A549 (cell line): ENCODE measurements at regions of chr14 and their contacts with region 1.

Region 1: GRCh38 chr14:104970231-104971101 is 7.7 kb downstream of the AHNAK2 start:
- DNase-seq: peak; percentile 78 to 90
- ATAC-seq: peak; percentile 30 to 60
- H3K4me3 ChIP-seq: peak overlapping the region; percentile 67
- H3K27ac ChIP-seq: peak overlapping the region; percentile 97 to 99
- H3K4me1 ChIP-seq: peaks cover 84% of the 10 kb centered on the region
- CTCF ChIP-seq: no peak
- EP300 ChIP-seq: no peak
- POLR2A ChIP-seq: peak; percentile 50
- RAD21 ChIP-seq: 0 out of 5 replicates have a peak, but pooled peaks of 1 of the 2 experiments have one; percentile 13

Region 2: DNA sequence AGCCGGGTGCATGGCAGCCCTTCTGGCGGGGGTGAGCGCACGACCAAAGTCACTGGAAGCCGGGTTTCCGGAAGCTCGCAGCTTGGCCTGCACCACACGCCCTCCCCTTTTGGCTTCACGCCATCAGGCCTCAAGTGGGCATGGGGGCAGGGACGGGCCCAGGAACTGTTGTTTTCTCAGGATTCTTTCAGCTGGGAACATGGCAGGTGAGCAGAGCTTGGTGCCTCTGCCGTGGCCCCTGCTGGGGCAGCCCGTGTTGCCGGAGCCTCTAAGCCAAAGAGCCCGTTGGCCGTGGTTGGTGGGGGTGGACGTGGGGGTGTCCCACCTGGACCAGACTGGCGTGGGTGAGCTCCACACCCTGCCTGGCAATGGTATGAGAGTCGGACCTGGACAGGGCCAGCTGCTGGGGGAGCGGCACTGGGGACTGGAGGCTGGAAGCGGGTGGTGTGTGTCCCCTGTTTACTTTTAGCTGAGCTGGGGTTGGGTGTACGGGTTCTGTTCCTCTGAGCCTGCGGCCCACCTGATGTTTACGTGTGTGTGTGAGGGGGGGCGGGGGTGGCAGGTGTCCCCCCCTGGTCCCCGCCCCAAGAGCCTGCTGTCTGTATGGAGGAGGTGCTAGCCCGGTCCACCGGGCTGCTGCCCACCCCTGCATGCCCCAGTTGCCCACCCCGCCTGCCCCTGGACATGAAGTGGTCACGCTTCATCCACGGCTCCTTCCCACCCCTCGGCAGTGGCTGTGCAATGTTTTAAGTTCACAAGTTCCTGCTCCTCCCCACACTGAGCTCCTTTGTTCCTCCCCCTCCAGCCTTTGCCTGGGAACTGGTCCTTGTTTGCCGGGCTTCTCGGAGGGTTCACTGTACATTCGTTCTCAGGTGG is 74.4 kb before region 1 on chr14:
- CTCF ChIA-PET with region 1: interaction called, 40 read pairs
- POLR2A ChIA-PET with region 1: interaction called, 5 read pairs
- DNase-seq: no peak
- ATAC-seq: peak; percentile 9 to 30; a peak in 3 of 6 replicates
- H3K4me3 ChIP-seq: no peak overlapping the region
- H3K27ac ChIP-seq: no peak overlapping the region
- H3K4me1 ChIP-seq: peaks cover 15% of the 10 kb centered on the region
- CTCF ChIP-seq: no peak
- EP300 ChIP-seq: no peak
- POLR2A ChIP-seq: no peak
- RAD21 ChIP-seq: no peak

Region 3: DNA sequence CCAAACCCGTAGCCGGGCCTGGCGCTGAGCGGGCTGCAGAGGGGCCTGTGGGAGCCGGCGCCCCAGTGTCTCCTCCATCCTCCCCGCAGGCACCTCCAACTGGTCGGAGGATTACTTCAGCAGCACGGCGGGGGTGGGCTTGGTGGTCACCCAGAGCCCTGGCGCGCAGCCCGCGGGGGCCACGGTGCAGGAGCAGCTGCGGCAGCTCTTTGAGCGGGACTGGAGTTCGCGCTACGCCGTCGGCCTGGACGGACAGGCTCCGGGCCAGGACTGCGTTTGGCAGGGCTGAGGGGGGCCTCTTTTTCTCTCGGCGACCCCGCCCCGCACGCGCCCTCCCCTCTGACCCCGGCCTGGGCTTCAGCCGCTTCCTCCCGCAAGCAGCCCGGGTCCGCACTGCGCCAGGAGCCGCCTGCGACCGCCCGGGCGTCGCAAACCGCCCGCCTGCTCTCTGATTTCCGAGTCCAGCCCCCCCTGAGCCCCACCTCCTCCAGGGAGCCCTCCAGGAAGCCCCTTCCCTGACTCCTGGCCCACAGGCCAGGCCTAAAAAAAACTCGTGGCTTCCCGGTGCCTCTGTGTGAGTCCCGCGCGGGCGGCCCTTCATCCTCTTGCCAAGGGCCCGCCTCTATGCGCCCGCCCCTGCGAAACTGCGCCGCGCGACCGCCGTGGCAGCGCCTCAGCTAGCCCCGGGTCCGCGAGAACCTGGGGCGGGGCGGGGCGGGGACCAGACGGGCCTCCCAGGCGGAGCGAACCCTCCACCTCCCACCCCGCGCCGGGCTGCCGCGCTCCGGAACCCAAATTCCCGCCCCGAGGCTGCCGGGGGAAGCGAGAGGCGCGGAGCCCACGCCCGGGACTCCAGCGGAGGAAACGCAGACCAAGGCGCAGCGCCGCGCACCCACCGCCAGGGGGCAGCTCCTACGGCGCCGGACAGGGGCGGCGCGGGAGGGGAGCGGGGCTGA is 37.5 kb before region 1 on chr14:
- CTCF ChIA-PET with region 1: interaction called, 86 read pairs
- POLR2A ChIA-PET with region 1: interaction called, 22 read pairs
- DNase-seq: peak; percentile 79 to 89
- ATAC-seq: peak; percentile 57 to 80
- H3K4me3 ChIP-seq: peak overlapping the region; percentile 48
- H3K27ac ChIP-seq: peak overlapping the region; percentile 79 to 92
- H3K4me1 ChIP-seq: peaks cover 7% of the 10 kb centered on the region; the same call in 1 of the 3 replicates
- CTCF ChIP-seq: peak; percentile 71
- EP300 ChIP-seq: no peak
- POLR2A ChIP-seq: no peak
- RAD21 ChIP-seq: peak; percentile 43 to 76; a peak in 4 of 5 replicates

Region 4: GRCh38 chr14:104956290-104956890 is 14.1 kb before region 1 on chr14:
- CTCF ChIA-PET with region 1: interaction called, 12 read pairs
- POLR2A ChIA-PET with region 1: interaction called, 3 read pairs
- DNase-seq: no peak
- ATAC-seq: peak in 1 of 2 experiments; percentile 24; a peak in 2 of 6 replicates
- H3K4me3 ChIP-seq: no peak overlapping the region
- H3K27ac ChIP-seq: no peak overlapping the region
- H3K4me1 ChIP-seq: peaks cover 7% of the 10 kb centered on the region; the same call in 2 of the 3 replicates
- CTCF ChIP-seq: no peak
- EP300 ChIP-seq: no peak
- POLR2A ChIP-seq: no peak
- RAD21 ChIP-seq: no peak

Region 5: GRCh38 chr14:104985675-104986525 is 15.4 kb after region 1 on chr14 and contains the start of gene CLBA1:
- CTCF ChIA-PET with region 1: interaction called, 39 read pairs
- POLR2A ChIA-PET with region 1: interaction called, 37 read pairs
- DNase-seq: peak; percentile 90 to 93
- ATAC-seq: peak; percentile 89 to 91
- H3K4me3 ChIP-seq: peak within 1 kb of the TSS; percentile 87
- H3K27ac ChIP-seq: peak within 1 kb of the TSS; percentile 89 to 96
- H3K4me1 ChIP-seq: peaks cover 16% of the 10 kb centered on the region; the same call in 2 of the 3 replicates
- CTCF ChIP-seq: no peak
- EP300 ChIP-seq: no peak
- POLR2A ChIP-seq: peak; percentile 55
- RAD21 ChIP-seq: no peak
- polyA plus RNA-seq, gene CLBA1: 11.3 and 11.5 TPM in 2 replicates

Region 6: GRCh38 chr14:105020815-105021655 is 50.6 kb after region 1 on chr14 and contains the start of gene CDCA4:
- CTCF ChIA-PET with region 1: interaction called, 81 read pairs
- POLR2A ChIA-PET with region 1: interaction called, 76 read pairs
- DNase-seq: peak; percentile 96 to 97
- ATAC-seq: peak; percentile 81 to 84
- H3K4me3 ChIP-seq: peak within 1 kb of the TSS; percentile 97
- H3K27ac ChIP-seq: peak within 1 kb of the TSS; percentile 97 to 98
- H3K4me1 ChIP-seq: peaks cover 75% of the 10 kb centered on the region
- CTCF ChIP-seq: no peak
- EP300 ChIP-seq: no peak
- POLR2A ChIP-seq: peak; percentile 71
- RAD21 ChIP-seq: no peak
- polyA plus RNA-seq, gene CDCA4: 19.5 and 24.2 TPM in 2 replicates